ENCODE measurements at regions of chr17 and their contacts with region 1.

Region 1: DNA sequence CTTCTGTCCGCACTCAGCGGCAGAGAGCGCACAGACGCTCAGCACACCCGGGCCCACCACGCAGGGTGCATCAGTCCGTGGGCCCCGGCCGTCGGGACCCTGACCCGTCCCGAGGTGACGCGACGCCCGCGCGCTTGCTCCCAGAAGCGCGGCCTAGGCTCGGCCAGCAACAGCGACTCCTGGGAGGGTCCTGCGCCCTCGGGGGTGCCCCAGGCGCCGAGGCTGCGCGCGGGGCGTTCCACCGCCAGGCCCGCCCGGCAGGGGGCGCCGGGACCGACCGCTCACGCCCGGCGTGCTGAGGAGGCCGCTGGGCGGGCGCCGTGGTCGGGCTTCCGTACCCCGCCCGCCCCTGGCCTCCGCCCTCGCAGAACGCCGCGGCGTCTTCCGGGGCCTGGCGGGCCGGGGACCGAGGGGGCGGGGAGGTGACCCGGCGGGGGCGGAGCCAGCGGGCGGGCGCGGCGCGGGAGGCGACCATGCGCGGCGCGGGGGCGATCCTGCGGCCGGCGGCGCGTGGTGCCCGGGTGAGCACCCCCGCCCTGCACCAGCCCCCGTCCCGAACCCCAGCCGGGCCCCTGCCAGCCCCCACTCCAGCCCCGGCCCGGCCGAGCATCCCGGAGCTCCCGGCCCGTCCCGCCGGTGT is at the start of gene CISD3:
- DNase-seq: peak; percentile 90 to 94
- ATAC-seq: peak; percentile 86 to 91 (median 90)
- H3K4me3 ChIP-seq: peak within 1 kb of the TSS; percentile 72
- H3K27ac ChIP-seq: peak within 1 kb of the TSS; percentile 77
- H3K4me1 ChIP-seq: peaks cover 20% of the 10 kb centered on the region
- H3K27me3 ChIP-seq: no peaks in the 10 kb centered on the region
- CTCF ChIP-seq: peak; percentile 79
- total RNA-seq, gene CISD3: 29.9 to 45.5 (median 37.4) TPM

Region 2: GRCh38 chr17:38699219-38700110 is 30.5 kb before region 1 on chr17:
- intact Hi-C with region 1: loop called in 1 of 2 experiments (anchors 5 kb)
- DNase-seq: no peak
- ATAC-seq: no peak
- H3K4me3 ChIP-seq: no peak overlapping the region
- H3K27ac ChIP-seq: no peak overlapping the region
- H3K4me1 ChIP-seq: peaks cover 23% of the 10 kb centered on the region
- H3K27me3 ChIP-seq: no peaks in the 10 kb centered on the region
- CTCF ChIP-seq: no peak

Region 3: DNA sequence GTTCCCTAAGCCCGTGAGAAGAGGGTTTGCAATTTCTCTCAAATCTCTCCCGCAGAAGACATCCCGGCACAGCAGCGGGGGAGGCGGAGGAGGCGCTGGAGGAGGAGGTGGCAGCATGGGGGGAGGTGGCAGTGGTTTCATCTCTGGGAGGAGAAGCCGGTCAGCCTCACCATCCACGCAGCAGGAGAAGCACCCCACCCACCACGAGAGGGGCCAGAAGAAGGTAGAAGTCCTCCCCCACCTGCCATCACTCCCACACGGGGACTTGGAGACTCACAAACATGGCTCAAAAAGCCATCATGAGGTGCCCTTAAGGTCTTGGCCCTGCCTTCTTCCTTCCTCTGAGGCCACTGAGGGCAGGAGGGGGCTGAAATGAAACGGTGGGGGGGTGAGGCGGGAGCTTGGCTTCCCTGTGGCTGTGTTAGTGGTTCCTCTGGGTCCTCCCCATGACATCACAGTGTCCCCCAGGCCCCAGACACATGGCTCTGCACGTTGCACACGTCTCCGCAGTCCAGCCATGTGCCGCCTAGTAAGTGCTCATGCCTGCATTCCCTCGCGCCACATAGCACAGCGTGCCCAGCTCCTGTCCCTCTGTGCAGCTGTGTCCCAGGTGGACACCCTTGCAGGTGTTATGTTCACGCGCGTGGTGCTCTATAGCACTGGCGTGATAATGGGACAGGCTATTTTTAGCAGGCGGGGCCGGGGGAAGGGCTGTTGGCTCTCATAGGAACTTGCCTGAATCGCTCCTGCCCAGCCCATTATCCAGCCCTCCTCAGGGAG is 18.0 kb before region 1 on chr17:
- intact Hi-C with region 1: loop called in 1 of 2 experiments (anchors 2 kb)
- DNase-seq: no peak
- ATAC-seq: peak; percentile 46 to 73 (median 58)
- H3K4me3 ChIP-seq: no peak overlapping the region
- H3K27ac ChIP-seq: peak overlapping the region; percentile 58
- H3K4me1 ChIP-seq: peaks cover 50% of the 10 kb centered on the region
- H3K27me3 ChIP-seq: no peaks in the 10 kb centered on the region
- CTCF ChIP-seq: no peak

Measured in psoas muscle (tissue), 8 donors.